Naive thymus-derived CD4-positive, alpha-beta T cell (primary cell): ENCODE measurements at regions of chr9 and their contacts with region 1.

Region 1: DNA sequence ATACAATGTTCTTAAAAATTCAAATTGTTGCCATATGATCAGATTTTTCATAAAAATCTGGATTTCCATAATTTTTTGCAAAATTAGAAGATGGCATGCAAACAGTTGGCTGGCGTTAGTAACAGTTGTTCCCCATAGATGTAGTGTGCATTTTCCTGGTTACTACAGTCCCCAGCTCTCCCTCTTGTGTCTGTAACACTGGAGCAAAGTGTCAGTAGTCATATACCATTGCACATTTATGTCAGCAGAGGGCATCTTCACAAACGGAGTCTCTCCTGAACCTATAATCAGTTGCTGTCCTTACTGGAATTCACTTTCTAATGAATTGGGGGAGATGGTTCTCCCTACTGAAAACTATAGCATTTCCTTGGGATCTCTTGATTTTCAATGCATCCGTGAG is 44.7 kb upstream of the DMAC1 start:
- DNase-seq: peak in 6 of 9 donors; percentile 2 to 44 (median 24)
- ATAC-seq: peak; percentile 73
- H3K4me3 ChIP-seq: no peak overlapping the region
- H3K4me3 Mint-ChIP-seq: peak overlapping the region in 1 of 10 donors; percentile 6
- H3K27ac ChIP-seq: no peak overlapping the region
- H3K27ac Mint-ChIP-seq: no peak overlapping the region
- H3K4me1 ChIP-seq: no peaks in the 10 kb centered on the region
- H3K4me1 Mint-ChIP-seq: peaks cover 0 to 3% (median 0%) of the 10 kb centered on the region in 7 donors
- H3K27me3 ChIP-seq: no peaks in the 10 kb centered on the region
- H3K27me3 Mint-ChIP-seq: peaks cover 0 to 4% (median 0%) of the 10 kb centered on the region in 5 donors

Region 2: GRCh38 chr9:7802666-7803065 is 41.6 kb before region 1 on chr9:
- CTCF ChIA-PET with region 1: no interaction called
- POLR2A ChIA-PET with region 1: no interaction called
- intact Hi-C with region 1: no loop called
- DNase-seq: no peak
- ATAC-seq: no peak
- H3K4me3 ChIP-seq: no peak overlapping the region
- H3K4me3 Mint-ChIP-seq: no peak overlapping the region
- H3K27ac ChIP-seq: no peak overlapping the region
- H3K27ac Mint-ChIP-seq: no peak overlapping the region
- H3K4me1 ChIP-seq: peaks cover 0 to 6% of the 10 kb centered on the region in 2 donors
- H3K4me1 Mint-ChIP-seq: peaks cover 7 to 31% (median 16%) of the 10 kb centered on the region in 7 donors
- H3K27me3 ChIP-seq: no peaks in the 10 kb centered on the region
- H3K27me3 Mint-ChIP-seq: peaks cover 0 to 4% (median 0%) of the 10 kb centered on the region in 5 donors

Region 3: GRCh38 chr9:7983490-7983889 is 139.2 kb after region 1 on chr9:
- CTCF ChIA-PET with region 1: no interaction called
- POLR2A ChIA-PET with region 1: no interaction called
- intact Hi-C with region 1: loop called in 1 of 2 experiments (anchors 5 kb)
- DNase-seq: no peak
- ATAC-seq: no peak
- H3K4me3 ChIP-seq: peak overlapping the region; percentile 26
- H3K4me3 Mint-ChIP-seq: peak overlapping the region in 8 of 10 donors; percentile 2 to 84 (median 66)
- H3K27ac ChIP-seq: no peak overlapping the region
- H3K27ac Mint-ChIP-seq: peak overlapping the region in 6 of 9 donors; percentile 17 to 95 (median 80)
- H3K4me1 ChIP-seq: peaks cover 0 to 30% of the 10 kb centered on the region in 2 donors
- H3K4me1 Mint-ChIP-seq: peaks cover 26 to 49% (median 42%) of the 10 kb centered on the region in 7 donors
- H3K27me3 ChIP-seq: no peaks in the 10 kb centered on the region
- H3K27me3 Mint-ChIP-seq: no peaks in the 10 kb centered on the region

Region 4: GRCh38 chr9:8053530-8053929 is 209.3 kb after region 1 on chr9:
- CTCF ChIA-PET with region 1: interaction called, 4 read pairs
- POLR2A ChIA-PET with region 1: no interaction called
- intact Hi-C with region 1: loop called (anchors 1 to 10 kb)
- DNase-seq: no peak
- ATAC-seq: no peak
- H3K4me3 ChIP-seq: no peak overlapping the region
- H3K4me3 Mint-ChIP-seq: no peak overlapping the region
- H3K27ac ChIP-seq: no peak overlapping the region
- H3K27ac Mint-ChIP-seq: no peak overlapping the region
- H3K4me1 ChIP-seq: no peaks in the 10 kb centered on the region
- H3K4me1 Mint-ChIP-seq: peaks cover 0 to 5% (median 0%) of the 10 kb centered on the region in 7 donors
- H3K27me3 ChIP-seq: no peaks in the 10 kb centered on the region
- H3K27me3 Mint-ChIP-seq: no peaks in the 10 kb centered on the region

Region 5: GRCh38 chr9:8088477-8088876 is 244.2 kb after region 1 on chr9:
- CTCF ChIA-PET with region 1: no interaction called
- POLR2A ChIA-PET with region 1: no interaction called
- intact Hi-C with region 1: loop called in 1 of 2 experiments (anchors 2 kb)
- DNase-seq: no peak
- ATAC-seq: no peak
- H3K4me3 ChIP-seq: no peak overlapping the region
- H3K4me3 Mint-ChIP-seq: no peak overlapping the region
- H3K27ac ChIP-seq: no peak overlapping the region
- H3K27ac Mint-ChIP-seq: no peak overlapping the region
- H3K4me1 ChIP-seq: no peaks in the 10 kb centered on the region
- H3K4me1 Mint-ChIP-seq: peaks cover 0 to 2% (median 0%) of the 10 kb centered on the region in 7 donors
- H3K27me3 ChIP-seq: no peaks in the 10 kb centered on the region
- H3K27me3 Mint-ChIP-seq: no peaks in the 10 kb centered on the region

Region 6: GRCh38 chr9:8179381-8180053 is 335.3 kb after region 1 on chr9:
- CTCF ChIA-PET with region 1: no interaction called
- POLR2A ChIA-PET with region 1: no interaction called
- intact Hi-C with region 1: loop called in 1 of 2 experiments (anchors 1 kb)
- DNase-seq: no peak
- ATAC-seq: no peak
- H3K4me3 ChIP-seq: no peak overlapping the region
- H3K4me3 Mint-ChIP-seq: no peak overlapping the region
- H3K27ac ChIP-seq: no peak overlapping the region
- H3K27ac Mint-ChIP-seq: no peak overlapping the region
- H3K4me1 ChIP-seq: no peaks in the 10 kb centered on the region
- H3K4me1 Mint-ChIP-seq: peaks cover 0 to 5% (median 0%) of the 10 kb centered on the region in 7 donors
- H3K27me3 ChIP-seq: no peaks in the 10 kb centered on the region
- H3K27me3 Mint-ChIP-seq: peaks cover 0 to 4% (median 0%) of the 10 kb centered on the region in 5 donors

Region 7: DNA sequence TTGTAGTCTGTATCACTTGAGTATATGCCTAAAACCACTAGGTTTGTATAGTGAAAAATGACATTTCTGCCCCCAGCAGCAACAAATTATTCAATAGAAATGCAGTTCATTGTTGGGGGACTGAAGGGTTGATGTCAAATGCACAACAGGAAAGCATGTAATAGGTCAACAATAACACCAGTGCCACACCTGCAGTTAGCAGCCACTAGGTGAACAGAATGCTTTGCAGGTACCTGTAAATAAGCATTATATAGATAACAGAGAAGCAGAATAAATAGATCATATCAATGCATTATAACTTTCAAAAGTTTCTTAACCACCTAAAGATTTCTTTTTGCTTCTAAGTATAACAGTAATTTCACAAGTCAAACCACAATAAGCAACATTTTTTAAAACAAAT is 391.2 kb after region 1 on chr9:
- CTCF ChIA-PET with region 1: no interaction called
- POLR2A ChIA-PET with region 1: no interaction called
- intact Hi-C with region 1: loop called in 1 of 2 experiments (anchors 5 kb)
- DNase-seq: no peak
- ATAC-seq: no peak
- H3K4me3 ChIP-seq: no peak overlapping the region
- H3K4me3 Mint-ChIP-seq: no peak overlapping the region
- H3K27ac ChIP-seq: no peak overlapping the region
- H3K27ac Mint-ChIP-seq: no peak overlapping the region
- H3K4me1 ChIP-seq: no peaks in the 10 kb centered on the region
- H3K4me1 Mint-ChIP-seq: no peaks in the 10 kb centered on the region
- H3K27me3 ChIP-seq: no peaks in the 10 kb centered on the region
- H3K27me3 Mint-ChIP-seq: peaks cover 0 to 11% (median 6%) of the 10 kb centered on the region in 5 donors